ENCODE measurements at regions of chr18 and their contacts with region 1.

Region 1: GRCh38 chr18:8844721-8845148 is 139.4 kb downstream of the MTCL1 start:
- DNase-seq: no peak

Region 2: DNA sequence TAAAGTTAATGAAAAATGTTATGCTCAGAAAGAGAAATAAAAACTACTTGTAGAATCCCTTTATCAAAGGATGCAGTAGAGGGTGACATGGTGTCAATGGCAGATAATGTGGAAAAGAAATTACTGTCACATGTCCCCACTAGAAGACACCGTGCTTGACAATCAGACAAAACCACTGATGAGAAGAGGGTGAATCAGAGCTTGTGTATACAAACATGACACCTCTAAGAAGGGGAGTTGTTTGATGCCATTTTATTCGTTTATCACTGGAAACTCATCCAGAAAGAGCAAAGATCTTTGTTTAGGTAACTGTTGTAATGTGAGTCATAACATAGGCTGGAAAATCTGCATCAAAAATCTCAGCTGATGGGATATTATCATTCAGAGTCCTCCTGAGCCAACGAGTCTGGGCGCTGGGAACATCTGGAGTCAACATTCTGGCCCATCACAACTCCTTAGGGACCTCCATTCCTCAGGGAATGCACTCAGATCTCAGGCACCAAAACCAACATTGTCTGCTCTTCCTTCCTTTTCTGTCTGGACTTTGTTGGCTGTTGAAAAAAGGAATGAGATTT is 285.0 kb before region 1 on chr18:
- in situ Hi-C with region 1: no loop called
- DNase-seq: no peak

Region 3: GRCh38 chr18:8601277-8602032 is 243.3 kb before region 1 on chr18:
- in situ Hi-C with region 1: no loop called
- DNase-seq: peak; percentile 61

Region 4: GRCh38 chr18:8890957-8891464 is 46.3 kb after region 1 on chr18:
- in situ Hi-C with region 1: loop called (anchors 10 kb)
- DNase-seq: no peak